CD4-positive, alpha-beta T cell (primary cell): ENCODE measurements at regions of chr18 and their contacts with region 1.

Region 1: DNA sequence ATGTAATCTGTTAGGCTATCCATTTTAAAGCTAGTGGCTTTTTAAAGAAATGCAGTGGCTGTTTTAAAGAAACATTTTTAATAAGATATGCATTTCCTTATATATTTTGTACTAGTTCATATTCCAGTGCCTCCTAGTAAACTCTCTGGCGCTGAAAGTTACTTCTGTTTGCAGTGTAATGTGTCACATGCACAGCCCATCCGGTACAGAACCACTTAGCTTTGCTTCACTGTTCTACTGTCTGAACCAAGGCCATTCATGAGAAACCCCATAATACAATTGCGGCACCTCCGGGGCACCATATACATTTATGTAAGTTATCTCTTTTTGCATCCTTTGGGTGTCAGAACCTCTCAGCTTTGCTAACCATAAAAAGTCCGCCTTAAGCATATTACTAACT is 114.6 kb upstream of the KCTD1 start:
- DNase-seq: no peak
- ATAC-seq: no peak
- H3K4me3 ChIP-seq: no peak overlapping the region
- H3K4me3 Mint-ChIP-seq: no peak overlapping the region
- H3K27ac ChIP-seq: no peak overlapping the region
- H3K27ac Mint-ChIP-seq: no peak overlapping the region
- H3K4me1 ChIP-seq: no peaks in the 10 kb centered on the region
- H3K4me1 Mint-ChIP-seq: no peaks in the 10 kb centered on the region
- H3K27me3 ChIP-seq: peaks cover 14% of the 10 kb centered on the region in 2 experiments
- H3K27me3 Mint-ChIP-seq: peaks cover 36% of the 10 kb centered on the region
- CTCF ChIP-seq: no peak

Region 2: GRCh38 chr18:25669741-25670140 is 993.3 kb before region 1 on chr18:
- CTCF ChIA-PET with region 1: no interaction called
- POLR2A ChIA-PET with region 1: no interaction called
- intact Hi-C with region 1: no loop called
- DNase-seq: no peak
- ATAC-seq: no peak
- H3K4me3 ChIP-seq: no peak overlapping the region
- H3K4me3 Mint-ChIP-seq: no peak overlapping the region
- H3K27ac ChIP-seq: no peak overlapping the region
- H3K27ac Mint-ChIP-seq: no peak overlapping the region
- H3K4me1 ChIP-seq: no peaks in the 10 kb centered on the region
- H3K4me1 Mint-ChIP-seq: no peaks in the 10 kb centered on the region
- H3K27me3 ChIP-seq: no peaks in the 10 kb centered on the region
- H3K27me3 Mint-ChIP-seq: peaks cover 9% of the 10 kb centered on the region
- CTCF ChIP-seq: no peak

Region 3: DNA sequence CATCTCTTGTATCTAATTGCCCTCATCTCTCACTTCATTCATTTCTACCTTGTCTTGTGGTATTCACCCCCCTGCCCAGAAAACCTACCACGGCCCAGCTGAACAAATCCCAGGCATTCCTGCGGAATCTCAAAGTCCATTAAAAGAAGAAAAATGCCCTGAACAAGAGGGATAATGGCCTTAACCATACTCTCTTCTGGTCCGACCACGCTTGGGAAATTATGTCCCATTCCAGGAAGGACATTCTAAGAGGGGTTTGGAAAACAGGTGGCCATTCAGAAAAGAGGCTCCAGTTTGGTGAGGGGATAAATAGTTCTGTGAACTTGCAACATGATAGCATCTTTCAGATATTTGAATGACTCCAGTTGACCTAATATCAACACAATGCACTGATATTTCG is 961.2 kb before region 1 on chr18:
- CTCF ChIA-PET with region 1: no interaction called
- POLR2A ChIA-PET with region 1: no interaction called
- intact Hi-C with region 1: no loop called
- DNase-seq: no peak
- ATAC-seq: no peak
- H3K4me3 ChIP-seq: no peak overlapping the region
- H3K4me3 Mint-ChIP-seq: no peak overlapping the region
- H3K27ac ChIP-seq: no peak overlapping the region
- H3K27ac Mint-ChIP-seq: no peak overlapping the region
- H3K4me1 ChIP-seq: no peaks in the 10 kb centered on the region
- H3K4me1 Mint-ChIP-seq: no peaks in the 10 kb centered on the region
- H3K27me3 ChIP-seq: no peaks in the 10 kb centered on the region
- H3K27me3 Mint-ChIP-seq: peaks cover 7% of the 10 kb centered on the region
- CTCF ChIP-seq: no peak

Region 4: DNA sequence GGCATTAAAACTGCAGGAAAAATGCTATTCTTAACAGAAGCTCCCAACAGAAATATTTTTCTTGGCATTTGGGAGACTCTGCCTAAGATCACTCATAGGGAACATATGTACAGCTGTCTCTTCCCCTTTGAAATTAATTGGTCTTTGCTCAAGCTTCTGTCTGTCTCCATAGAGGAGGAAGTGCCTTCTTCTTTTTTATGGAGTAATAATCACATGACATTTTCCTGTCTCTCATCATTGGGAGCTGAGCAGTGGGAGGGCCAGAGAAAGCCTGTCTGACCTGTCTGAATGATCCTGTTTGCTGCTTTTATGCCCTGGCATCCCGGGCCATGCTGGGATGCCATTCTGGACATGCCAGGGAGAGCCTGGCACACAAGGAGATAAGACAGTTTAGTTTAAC is 56.9 kb after region 1 on chr18:
- CTCF ChIA-PET with region 1: no interaction called
- POLR2A ChIA-PET with region 1: no interaction called
- intact Hi-C with region 1: loop called in 1 of 2 experiments (anchors 10 kb)
- DNase-seq: no peak
- ATAC-seq: no peak
- H3K4me3 ChIP-seq: no peak overlapping the region
- H3K4me3 Mint-ChIP-seq: no peak overlapping the region
- H3K27ac ChIP-seq: no peak overlapping the region
- H3K27ac Mint-ChIP-seq: no peak overlapping the region
- H3K4me1 ChIP-seq: no peaks in the 10 kb centered on the region
- H3K4me1 Mint-ChIP-seq: no peaks in the 10 kb centered on the region
- H3K27me3 ChIP-seq: no peaks in the 10 kb centered on the region
- H3K27me3 Mint-ChIP-seq: peaks cover 5% of the 10 kb centered on the region
- CTCF ChIP-seq: no peak